Activated CD4-positive, alpha-beta T cell treated with anti-CD3 and anti-CD28 coated beads for 36 hours (primary cell): ENCODE measurements at regions of chr4 and their contacts with region 1.

Region 1: GRCh38 chr4:47562297-47562696 is 77.2 kb downstream of the ATP10D start:
- DNase-seq: no peak
- ATAC-seq: no peak
- H3K4me3 Mint-ChIP-seq: no peak overlapping the region
- H3K27ac Mint-ChIP-seq: no peak overlapping the region
- H3K4me1 Mint-ChIP-seq: peaks cover 4% of the 10 kb centered on the region
- H3K27me3 Mint-ChIP-seq: no peaks in the 10 kb centered on the region

Region 2: GRCh38 chr4:46954643-46955042 is 607.7 kb before region 1 on chr4:
- CTCF ChIA-PET with region 1: no interaction called
- POLR2A ChIA-PET with region 1: no interaction called
- intact Hi-C with region 1: no loop called
- DNase-seq: no peak
- ATAC-seq: no peak
- H3K4me3 Mint-ChIP-seq: no peak overlapping the region
- H3K27ac Mint-ChIP-seq: no peak overlapping the region
- H3K4me1 Mint-ChIP-seq: no peaks in the 10 kb centered on the region
- H3K27me3 Mint-ChIP-seq: peaks cover 4% of the 10 kb centered on the region

Region 3: DNA sequence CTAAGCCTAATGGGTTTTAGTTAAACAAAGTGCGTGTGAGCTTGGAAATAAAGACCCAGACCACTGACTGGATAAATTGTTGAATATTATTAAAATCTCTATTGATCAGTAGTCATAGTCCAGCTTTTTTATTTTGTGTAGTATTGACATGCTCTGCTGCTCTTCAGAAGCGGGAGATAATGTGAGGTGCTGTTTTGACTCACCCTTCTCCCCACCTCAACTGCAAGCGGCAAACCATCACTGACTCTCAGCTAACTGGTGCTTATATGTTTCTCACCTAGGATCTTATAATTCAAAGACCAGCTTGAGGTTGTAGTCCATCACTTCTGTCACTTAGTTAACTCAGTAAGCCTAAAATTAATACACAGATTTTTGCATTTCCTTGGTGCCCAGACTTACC is 171.0 kb before region 1 on chr4:
- CTCF ChIA-PET with region 1: no interaction called
- POLR2A ChIA-PET with region 1: no interaction called
- intact Hi-C with region 1: loop called in 1 of 2 experiments (anchors 10 kb)
- DNase-seq: no peak
- ATAC-seq: no peak
- H3K4me3 Mint-ChIP-seq: no peak overlapping the region
- H3K27ac Mint-ChIP-seq: no peak overlapping the region
- H3K4me1 Mint-ChIP-seq: no peaks in the 10 kb centered on the region
- H3K27me3 Mint-ChIP-seq: peaks cover 5% of the 10 kb centered on the region

Region 4: DNA sequence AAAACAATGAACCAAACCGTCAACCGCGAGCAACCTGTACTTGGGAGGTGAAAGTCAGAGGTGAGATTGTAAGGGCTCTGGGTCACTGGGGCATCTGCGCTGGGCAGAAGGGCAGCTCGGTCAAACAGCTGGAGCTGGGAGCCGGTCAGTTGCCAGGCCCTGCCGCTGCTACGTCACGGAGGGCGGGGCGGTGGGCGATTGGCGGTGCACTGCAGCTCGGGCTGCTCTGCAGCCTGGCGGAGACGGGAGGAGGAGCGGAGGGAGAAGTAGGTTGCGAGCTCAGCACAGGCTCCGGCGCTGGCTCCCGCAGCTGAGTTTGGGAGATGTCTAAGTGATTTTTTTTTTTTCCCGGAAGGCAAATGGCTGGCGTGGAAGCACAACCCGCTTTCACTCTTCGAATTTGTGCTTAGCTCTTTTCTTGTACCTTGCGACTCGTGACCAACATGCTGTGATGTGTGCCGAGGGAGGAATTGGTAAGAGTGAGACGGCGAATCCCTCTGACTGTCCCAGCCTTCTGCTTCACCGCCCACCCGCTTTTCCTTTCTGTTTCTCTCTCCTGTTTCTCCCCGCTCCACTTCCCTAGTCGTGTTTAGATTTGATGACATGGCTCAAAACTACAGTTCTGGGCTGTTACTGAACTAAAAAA is 77.1 kb before region 1 on chr4 and contains the start of gene ATP10D:
- CTCF ChIA-PET with region 1: interaction called, 8 read pairs
- POLR2A ChIA-PET with region 1: no interaction called
- intact Hi-C with region 1: loop called (anchors 2 to 5 kb)
- DNase-seq: peak; percentile 88
- ATAC-seq: peak; percentile 97
- H3K4me3 Mint-ChIP-seq: peak within 1 kb of the TSS; percentile 83
- H3K27ac Mint-ChIP-seq: peak within 1 kb of the TSS; percentile 82
- H3K4me1 Mint-ChIP-seq: peaks cover 26% of the 10 kb centered on the region
- H3K27me3 Mint-ChIP-seq: no peaks in the 10 kb centered on the region
- total RNA-seq, gene ATP10D: 2.5 to 2.8 TPM

Region 5: DNA sequence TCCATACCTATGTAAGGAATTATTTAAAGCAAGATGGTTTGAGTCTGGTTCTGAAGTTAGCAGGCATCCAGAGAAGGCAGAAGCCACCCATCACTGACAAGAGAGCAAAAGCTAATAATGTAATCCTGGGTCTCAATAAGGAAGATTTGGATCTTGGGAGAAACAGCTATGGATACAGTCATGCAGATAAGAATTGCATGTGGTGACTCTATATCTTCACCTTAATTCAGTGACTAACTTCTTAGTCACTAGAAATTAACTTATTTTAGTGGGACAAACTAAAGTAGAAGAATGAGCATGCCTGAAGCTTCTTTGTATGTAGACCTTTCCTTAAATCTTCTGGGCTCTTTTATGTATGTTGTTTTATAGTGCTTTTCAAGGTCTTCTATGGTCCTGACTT is 10.6 kb before region 1 on chr4:
- CTCF ChIA-PET with region 1: interaction called, 10 read pairs
- POLR2A ChIA-PET with region 1: no interaction called
- intact Hi-C with region 1: no loop called
- DNase-seq: no peak
- ATAC-seq: no peak
- H3K4me3 Mint-ChIP-seq: no peak overlapping the region
- H3K27ac Mint-ChIP-seq: no peak overlapping the region
- H3K4me1 Mint-ChIP-seq: no peaks in the 10 kb centered on the region
- H3K27me3 Mint-ChIP-seq: no peaks in the 10 kb centered on the region

Region 6: GRCh38 chr4:48668254-48669017 is 1106.1 kb after region 1 on chr4:
- CTCF ChIA-PET with region 1: no interaction called
- POLR2A ChIA-PET with region 1: no interaction called
- intact Hi-C with region 1: no loop called
- DNase-seq: no peak
- ATAC-seq: no peak
- H3K4me3 Mint-ChIP-seq: no peak overlapping the region
- H3K27ac Mint-ChIP-seq: no peak overlapping the region
- H3K4me1 Mint-ChIP-seq: peaks cover 30% of the 10 kb centered on the region
- H3K27me3 Mint-ChIP-seq: no peaks in the 10 kb centered on the region